Activated CD4-positive, alpha-beta T cell treated with anti-CD3 and anti-CD28 coated beads, Interleukin-2, amount 10 ng/mL, durations not matched to agents 7 days and 5 days (primary cell): ENCODE measurements at regions of chr2 and their contacts with region 1.

Region 1: GRCh38 chr2:181319286-181319685 is 137.9 kb upstream of the ITGA4 start:
- DNase-seq: no peak
- H3K4me3 Mint-ChIP-seq: no peak overlapping the region
- H3K27ac Mint-ChIP-seq: no peak overlapping the region
- H3K4me1 Mint-ChIP-seq: peaks cover 10% of the 10 kb centered on the region
- H3K27me3 Mint-ChIP-seq: no peaks in the 10 kb centered on the region

Region 2: GRCh38 chr2:181305301-181306123 is 13.8 kb before region 1 on chr2:
- CTCF ChIA-PET with region 1: interaction called, 10 read pairs
- POLR2A ChIA-PET with region 1: no interaction called
- DNase-seq: peak; percentile 79
- H3K4me3 Mint-ChIP-seq: peak overlapping the region; percentile 65
- H3K27ac Mint-ChIP-seq: peak overlapping the region; percentile 99
- H3K4me1 Mint-ChIP-seq: peaks cover 80% of the 10 kb centered on the region
- H3K27me3 Mint-ChIP-seq: no peaks in the 10 kb centered on the region

Region 3: GRCh38 chr2:181683518-181684453 is 364.5 kb after region 1 on chr2:
- CTCF ChIA-PET with region 1: no interaction called
- POLR2A ChIA-PET with region 1: no interaction called
- DNase-seq: no peak
- H3K4me3 Mint-ChIP-seq: peak overlapping the region; percentile 17
- H3K27ac Mint-ChIP-seq: no peak overlapping the region
- H3K4me1 Mint-ChIP-seq: peaks cover 38% of the 10 kb centered on the region
- H3K27me3 Mint-ChIP-seq: peaks cover 85% of the 10 kb centered on the region